ENCODE measurements at regions of chr2 and their contacts with region 1.

Region 1: GRCh38 chr2:241315093-241315878 is at the start of gene HDLBP:
- DNase-seq: peak; percentile 99
- H3K4me3 ChIP-seq: peak within 1 kb of the TSS; percentile 90 to 94
- H3K27ac ChIP-seq: peak within 1 kb of the TSS; percentile 98 to 99
- H3K4me1 ChIP-seq: peaks cover 22% of the 10 kb centered on the region
- H3K27me3 ChIP-seq: no peaks in the 10 kb centered on the region
- CTCF ChIP-seq: peak in 2 of 3 experiments; percentile 1 to 4
- POLR2A ChIP-seq: peak; percentile 2
- total RNA-seq, gene HDLBP: 648 to 790 TPM

Region 2: GRCh38 chr2:241271641-241272297 is 43.5 kb before region 1 on chr2:
- intact Hi-C with region 1: loop called (anchors 2 kb)
- DNase-seq: peak; percentile 93
- H3K4me3 ChIP-seq: peak overlapping the region; percentile 76 to 83
- H3K27ac ChIP-seq: peak overlapping the region; percentile 79 to 93
- H3K4me1 ChIP-seq: peaks cover 10% of the 10 kb centered on the region
- H3K27me3 ChIP-seq: no peaks in the 10 kb centered on the region
- CTCF ChIP-seq: no peak
- POLR2A ChIP-seq: no peak